ENCODE measurements at regions of chr1 and their contacts with region 1.

Region 1: GRCh38 chr1:85109475-85109874 is 61.2 kb upstream of the MCOLN3 start:
- DNase-seq: peak; percentile 59
- H3K4me3 ChIP-seq: no peak overlapping the region
- H3K27ac ChIP-seq: no peak overlapping the region
- H3K4me1 ChIP-seq: no peaks in the 10 kb centered on the region
- H3K27me3 ChIP-seq: no peaks in the 10 kb centered on the region
- CTCF ChIP-seq: peak; percentile 69

Region 2: GRCh38 chr1:85240174-85240601 is 130.7 kb after region 1 on chr1:
- intact Hi-C with region 1: loop called (anchors 5 kb)
- DNase-seq: no peak
- H3K4me3 ChIP-seq: no peak overlapping the region
- H3K27ac ChIP-seq: no peak overlapping the region
- H3K4me1 ChIP-seq: no peaks in the 10 kb centered on the region
- H3K27me3 ChIP-seq: no peaks in the 10 kb centered on the region
- CTCF ChIP-seq: no peak

Region 3: GRCh38 chr1:85259118-85259911 is 149.8 kb after region 1 on chr1 and contains the start of gene C1orf52:
- intact Hi-C with region 1: loop called (anchors 5 kb)
- DNase-seq: peak; percentile 97
- H3K4me3 ChIP-seq: peak within 1 kb of the TSS; percentile 72
- H3K27ac ChIP-seq: peak within 1 kb of the TSS; percentile 42
- H3K4me1 ChIP-seq: peaks cover 2% of the 10 kb centered on the region
- H3K27me3 ChIP-seq: no peaks in the 10 kb centered on the region
- CTCF ChIP-seq: peak; percentile 99
- total RNA-seq, gene C1orf52: 11.3 to 19.9 TPM